MCF 10A (cell line): ENCODE measurements at regions of chr4 and their contacts with region 1.

Region 1: DNA sequence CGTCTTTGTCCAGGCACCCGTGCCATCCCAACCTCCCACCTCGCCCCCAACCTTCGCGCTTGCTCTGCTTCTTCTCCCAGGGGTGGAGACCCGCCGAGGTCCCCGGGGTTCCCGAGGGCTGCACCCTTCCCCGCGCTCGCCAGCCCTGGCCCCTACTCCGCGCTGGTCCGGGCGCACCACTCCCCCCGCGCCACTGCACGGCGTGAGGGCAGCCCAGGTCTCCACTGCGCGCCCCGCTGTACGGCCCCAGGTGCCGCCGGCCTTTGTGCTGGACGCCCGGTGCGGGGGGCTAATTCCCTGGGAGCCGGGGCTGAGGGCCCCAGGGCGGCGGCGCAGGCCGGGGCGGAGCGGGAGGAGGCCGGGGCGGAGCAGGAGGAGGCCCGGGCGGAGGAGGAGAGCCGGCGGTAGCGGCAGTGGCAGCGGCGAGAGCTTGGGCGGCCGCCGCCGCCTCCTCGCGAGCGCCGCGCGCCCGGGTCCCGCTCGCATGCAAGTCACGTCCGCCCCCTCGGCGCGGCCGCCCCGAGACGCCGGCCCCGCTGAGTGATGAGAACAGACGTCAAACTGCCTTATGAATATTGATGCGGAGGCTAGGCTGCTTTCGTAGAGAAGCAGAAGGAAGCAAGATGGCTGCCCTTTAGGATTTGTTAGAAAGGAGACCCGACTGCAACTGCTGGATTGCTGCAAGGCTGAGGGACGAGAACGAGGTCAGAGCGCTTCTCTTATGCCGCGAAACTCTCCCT is at the start of gene TET2:
- DNase-seq: peak; percentile 85
- H3K4me3 Mint-ChIP-seq: peak within 1 kb of the TSS; percentile 95
- H3K27ac Mint-ChIP-seq: peak within 1 kb of the TSS; percentile 97
- H3K4me1 Mint-ChIP-seq: peaks cover 20% of the 10 kb centered on the region
- H3K27me3 Mint-ChIP-seq: no peaks in the 10 kb centered on the region
- CTCF ChIP-seq: no peak
- total RNA-seq, gene TET2: 20.5 and 20.9 TPM in 2 replicates

Region 2: DNA sequence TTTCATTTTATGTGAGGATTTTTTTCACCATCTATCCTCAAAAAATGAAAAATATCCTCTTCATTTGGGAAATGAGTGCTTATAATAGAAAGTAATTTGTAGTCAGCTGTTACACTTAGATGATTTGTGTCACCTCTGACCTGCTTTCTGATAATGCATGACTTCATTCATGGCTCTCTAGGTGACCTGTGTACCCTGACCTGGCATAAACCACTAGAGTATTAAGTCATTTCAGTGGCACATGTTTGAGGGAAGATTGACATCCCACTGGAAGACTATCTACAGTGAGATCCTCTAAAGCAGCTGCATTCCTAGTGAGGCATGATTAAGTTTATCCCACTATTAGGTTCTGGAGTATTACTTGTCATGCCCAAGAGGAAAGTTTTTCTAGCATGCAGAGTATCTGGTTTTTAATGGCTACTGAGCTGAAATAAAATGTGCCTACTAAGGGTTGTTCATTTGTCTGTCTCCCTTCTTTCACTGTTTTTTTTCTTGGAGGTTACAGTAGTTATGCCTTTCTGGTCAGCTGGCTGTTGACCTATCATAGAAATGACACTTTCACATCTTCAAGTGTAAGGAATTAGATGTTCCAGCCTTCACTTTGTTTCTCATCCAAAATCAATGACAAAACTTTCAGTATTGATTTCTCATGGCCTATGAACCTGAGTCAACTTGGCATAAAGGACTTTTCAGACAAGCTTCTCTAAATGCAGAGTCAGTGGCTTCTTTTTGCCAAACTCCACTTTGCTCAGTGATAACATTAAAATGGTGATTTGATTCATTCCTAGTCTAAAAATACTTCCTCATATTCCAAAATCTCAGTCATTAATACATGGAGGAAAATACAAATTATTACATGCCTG is 33.3 kb after region 1 on chr4:
- CTCF ChIA-PET with region 1: no interaction called
- POLR2A ChIA-PET with region 1: no interaction called
- intact Hi-C with region 1: no loop called
- DNase-seq: no peak
- H3K4me3 Mint-ChIP-seq: no peak overlapping the region
- H3K27ac Mint-ChIP-seq: no peak overlapping the region
- H3K4me1 Mint-ChIP-seq: peaks cover 18% of the 10 kb centered on the region
- H3K27me3 Mint-ChIP-seq: no peaks in the 10 kb centered on the region
- CTCF ChIP-seq: no peak

Region 3: GRCh38 chr4:105191621-105192210 is 45.3 kb after region 1 on chr4:
- CTCF ChIA-PET with region 1: no interaction called
- POLR2A ChIA-PET with region 1: interaction called, 3 read pairs
- intact Hi-C with region 1: loop called (anchors 5 kb)
- DNase-seq: peak; percentile 13
- H3K4me3 Mint-ChIP-seq: no peak overlapping the region
- H3K27ac Mint-ChIP-seq: no peak overlapping the region
- H3K4me1 Mint-ChIP-seq: peaks cover 30% of the 10 kb centered on the region
- H3K27me3 Mint-ChIP-seq: no peaks in the 10 kb centered on the region
- CTCF ChIP-seq: no peak

Region 4: DNA sequence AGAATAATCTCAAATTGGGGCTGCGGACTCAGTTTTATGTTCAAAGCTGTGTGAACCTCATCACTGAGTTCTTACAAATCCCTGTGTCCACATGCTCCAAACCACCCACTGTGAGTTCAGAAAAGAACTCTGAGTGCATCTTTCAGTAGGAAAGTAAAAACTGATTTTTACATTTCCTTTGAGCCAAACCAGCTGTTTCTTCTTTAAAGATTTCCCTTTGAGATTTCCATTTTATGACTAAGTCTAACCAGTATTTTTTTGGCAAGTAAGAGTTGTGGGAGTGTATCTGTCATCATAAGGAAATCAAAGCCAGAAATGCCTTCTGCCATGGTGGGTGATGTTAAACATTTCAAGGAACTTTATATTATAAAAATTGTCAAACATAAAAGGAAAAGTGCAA is 100.3 kb after region 1 on chr4:
- CTCF ChIA-PET with region 1: no interaction called
- POLR2A ChIA-PET with region 1: no interaction called
- intact Hi-C with region 1: loop called (anchors 10 kb)
- DNase-seq: no peak
- H3K4me3 Mint-ChIP-seq: no peak overlapping the region
- H3K27ac Mint-ChIP-seq: no peak overlapping the region
- H3K4me1 Mint-ChIP-seq: no peaks in the 10 kb centered on the region
- H3K27me3 Mint-ChIP-seq: no peaks in the 10 kb centered on the region
- CTCF ChIP-seq: no peak

Region 5: DNA sequence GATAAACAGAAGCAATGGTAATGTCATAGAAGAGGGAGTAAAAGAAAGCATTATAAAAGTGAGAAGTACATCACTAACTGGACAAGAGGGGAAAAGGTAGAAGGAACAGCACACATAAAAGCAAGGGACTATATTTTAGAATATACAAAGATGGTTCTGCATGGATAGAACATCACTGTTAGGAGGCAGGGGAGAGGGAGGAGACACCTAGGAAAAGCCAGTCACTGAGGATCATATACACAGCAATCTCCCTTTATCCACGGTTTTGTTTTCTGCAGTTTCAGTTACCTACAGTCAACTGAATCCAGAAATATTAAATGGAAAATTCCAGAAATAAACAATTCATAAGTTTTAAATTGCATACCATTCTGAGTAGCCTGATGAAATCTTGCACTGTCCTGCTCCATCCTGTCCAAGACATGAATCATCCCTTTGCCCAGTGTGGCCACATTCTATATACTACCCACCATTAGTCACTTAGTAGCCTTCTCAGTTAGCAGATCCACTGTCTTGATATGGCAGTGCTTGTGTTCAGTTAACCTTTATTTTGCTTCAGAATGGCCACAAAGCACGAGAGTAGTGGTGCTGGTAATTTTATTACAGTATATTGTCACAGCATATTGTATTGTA is 253.2 kb after region 1 on chr4:
- CTCF ChIA-PET with region 1: no interaction called
- POLR2A ChIA-PET with region 1: no interaction called
- intact Hi-C with region 1: loop called (anchors 10 kb)
- DNase-seq: peak; percentile 84
- H3K4me3 Mint-ChIP-seq: no peak overlapping the region
- H3K27ac Mint-ChIP-seq: no peak overlapping the region
- H3K4me1 Mint-ChIP-seq: peaks cover 6% of the 10 kb centered on the region
- H3K27me3 Mint-ChIP-seq: no peaks in the 10 kb centered on the region
- CTCF ChIP-seq: no peak

Region 6: DNA sequence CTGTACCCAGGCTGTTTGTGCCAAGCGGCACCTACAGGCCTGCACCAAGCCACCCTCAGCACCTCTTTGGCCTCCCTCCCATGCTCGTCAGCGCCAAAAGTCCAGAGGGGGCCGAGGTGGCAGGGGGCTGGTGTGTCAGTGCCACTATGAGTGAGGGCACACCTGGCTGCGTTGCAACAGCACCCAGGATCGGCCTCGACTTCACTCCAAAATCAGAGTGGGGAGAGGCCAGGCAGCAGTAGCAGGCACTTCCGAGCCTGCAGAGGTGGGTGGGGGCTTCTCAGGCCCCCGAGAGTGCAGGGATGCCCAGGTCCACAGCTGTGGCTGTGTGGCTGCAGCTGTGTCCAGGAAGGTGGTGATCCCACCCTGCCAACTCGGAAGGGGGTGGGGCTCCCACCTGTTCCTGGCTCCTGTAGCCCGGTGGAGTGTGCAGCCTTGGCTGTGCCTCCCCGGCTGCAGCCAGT is 268.9 kb after region 1 on chr4:
- CTCF ChIA-PET with region 1: no interaction called
- POLR2A ChIA-PET with region 1: no interaction called
- intact Hi-C with region 1: no loop called
- DNase-seq: no peak
- H3K4me3 Mint-ChIP-seq: no peak overlapping the region
- H3K27ac Mint-ChIP-seq: no peak overlapping the region
- H3K4me1 Mint-ChIP-seq: no peaks in the 10 kb centered on the region
- H3K27me3 Mint-ChIP-seq: no peaks in the 10 kb centered on the region
- CTCF ChIP-seq: no peak

Region 7: DNA sequence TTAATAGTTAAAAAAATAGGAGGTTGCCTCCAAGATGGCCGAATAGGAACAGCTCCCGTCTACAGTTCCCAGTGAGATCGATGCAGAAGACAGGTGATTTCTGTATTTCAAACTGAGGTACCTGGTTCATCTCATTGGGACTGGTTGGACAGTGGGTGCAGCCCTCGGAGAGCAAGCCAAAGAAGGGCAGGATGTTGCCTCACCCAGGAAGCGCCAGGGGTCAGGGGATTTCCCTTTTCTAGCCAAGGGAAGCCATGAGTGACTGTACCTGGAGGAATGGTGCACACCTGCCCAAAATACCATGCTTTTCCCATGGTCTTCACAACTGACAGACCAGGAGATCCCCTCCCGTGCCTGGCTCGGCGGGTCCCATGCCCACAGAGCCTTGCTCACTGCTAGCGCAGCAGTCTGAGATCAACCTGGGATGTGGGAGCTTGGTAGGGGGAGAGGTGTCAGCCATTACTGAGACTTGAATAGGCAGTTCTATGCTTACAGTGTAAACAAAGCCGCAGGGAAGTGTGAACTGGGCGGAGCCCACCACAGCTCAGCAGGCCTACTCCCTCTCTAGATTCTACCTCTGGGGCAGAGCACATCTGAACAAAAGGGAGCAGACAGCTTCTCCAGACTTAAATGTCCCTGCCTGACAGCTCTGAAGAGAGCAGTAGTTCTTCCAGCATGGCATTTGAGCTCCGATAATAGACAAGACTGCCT is 279.9 kb after region 1 on chr4:
- CTCF ChIA-PET with region 1: no interaction called
- POLR2A ChIA-PET with region 1: no interaction called
- intact Hi-C with region 1: no loop called
- DNase-seq: no peak
- H3K4me3 Mint-ChIP-seq: no peak overlapping the region
- H3K27ac Mint-ChIP-seq: no peak overlapping the region
- H3K4me1 Mint-ChIP-seq: no peaks in the 10 kb centered on the region
- H3K27me3 Mint-ChIP-seq: no peaks in the 10 kb centered on the region
- CTCF ChIP-seq: no peak

Region 8: GRCh38 chr4:105715692-105716278 is 569.3 kb after region 1 on chr4:
- CTCF ChIA-PET with region 1: no interaction called
- POLR2A ChIA-PET with region 1: no interaction called
- intact Hi-C with region 1: loop called (anchors 5 kb)
- DNase-seq: peak; percentile 55
- H3K4me3 Mint-ChIP-seq: no peak overlapping the region
- H3K27ac Mint-ChIP-seq: peak overlapping the region; percentile 90
- H3K4me1 Mint-ChIP-seq: peaks cover 12% of the 10 kb centered on the region
- H3K27me3 Mint-ChIP-seq: no peaks in the 10 kb centered on the region
- CTCF ChIP-seq: no peak

Region 9: GRCh38 chr4:105909787-105910281 is 763.4 kb after region 1 on chr4:
- CTCF ChIA-PET with region 1: no interaction called
- POLR2A ChIA-PET with region 1: no interaction called
- intact Hi-C with region 1: no loop called
- DNase-seq: peak; percentile 59
- H3K4me3 Mint-ChIP-seq: no peak overlapping the region
- H3K27ac Mint-ChIP-seq: peak overlapping the region; percentile 50
- H3K4me1 Mint-ChIP-seq: peaks cover 10% of the 10 kb centered on the region
- H3K27me3 Mint-ChIP-seq: no peaks in the 10 kb centered on the region
- CTCF ChIP-seq: no peak